Breast epithelium (tissue), 4 donors: ENCODE measurements at regions of chr16 and their contacts with region 1.

Region 1: DNA sequence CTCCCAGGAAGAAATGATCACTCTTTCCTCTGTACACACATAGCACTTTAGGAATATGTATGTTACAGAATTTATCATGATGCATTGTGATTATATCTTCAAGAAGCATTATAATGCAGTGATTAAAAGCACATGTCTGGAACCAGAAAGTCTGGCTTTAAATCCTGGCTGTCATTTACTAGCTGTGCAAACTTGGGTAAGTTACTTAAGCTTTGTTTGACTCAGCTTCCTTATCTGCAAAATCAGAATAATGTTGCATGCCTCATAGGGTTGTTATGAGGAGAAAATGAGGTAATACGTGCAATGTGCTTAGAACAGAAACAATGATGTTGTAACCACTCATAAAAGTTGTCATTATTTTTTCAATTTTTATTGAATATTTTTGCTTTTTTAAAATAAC is 156.3 kb upstream of the ZKSCAN2 start:
- DNase-seq: no peak
- H3K4me3 ChIP-seq: no peak overlapping the region
- H3K27ac ChIP-seq: no peak overlapping the region
- H3K4me1 ChIP-seq: no peaks in the 10 kb centered on the region
- H3K27me3 ChIP-seq: no peaks in the 10 kb centered on the region
- CTCF ChIP-seq: no peak
- POLR2A ChIP-seq: no peak

Region 2: DNA sequence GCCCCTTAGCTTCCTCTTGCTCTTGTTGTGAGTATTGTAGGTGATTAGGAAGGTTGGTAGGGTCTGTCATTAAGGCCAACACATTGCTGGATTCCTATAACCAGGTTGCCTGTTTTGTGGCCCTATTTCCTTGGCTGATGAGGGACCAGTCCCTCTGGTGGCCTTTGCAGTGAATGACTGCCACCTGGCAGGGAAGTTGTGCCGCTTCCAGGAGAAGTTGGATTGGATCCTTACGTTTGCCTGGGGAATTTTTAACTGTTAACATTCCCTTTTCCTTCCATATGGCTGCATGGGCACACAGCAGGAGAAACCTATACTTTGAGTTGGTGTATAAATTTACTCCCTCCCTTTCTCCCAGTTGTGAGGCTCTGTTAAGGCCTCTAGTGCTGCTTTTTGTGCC is 270.1 kb before region 1 on chr16:
- intact Hi-C with region 1: no loop called
- DNase-seq: no peak
- H3K4me3 ChIP-seq: no peak overlapping the region
- H3K27ac ChIP-seq: no peak overlapping the region
- H3K4me1 ChIP-seq: no peaks in the 10 kb centered on the region
- H3K27me3 ChIP-seq: no peaks in the 10 kb centered on the region
- CTCF ChIP-seq: no peak
- POLR2A ChIP-seq: no peak

Region 3: GRCh38 chr16:25750488-25751216 is 336.7 kb after region 1 on chr16:
- intact Hi-C with region 1: loop called (anchors 10 kb)
- DNase-seq: no peak
- H3K4me3 ChIP-seq: no peak overlapping the region
- H3K27ac ChIP-seq: no peak overlapping the region
- H3K4me1 ChIP-seq: no peaks in the 10 kb centered on the region
- H3K27me3 ChIP-seq: no peaks in the 10 kb centered on the region
- CTCF ChIP-seq: no peak
- POLR2A ChIP-seq: no peak